ENCODE measurements at regions of chr19 and their contacts with region 1.

Region 1: GRCh38 chr19:18785179-18786128 is 5.7 kb downstream of the COMP start:
- DNase-seq: peak; percentile 19 to 71 (median 45)
- ATAC-seq: peak; percentile 85
- H3K4me3 ChIP-seq: no peak overlapping the region
- H3K4me3 Mint-ChIP-seq: peak overlapping the region; percentile 12 to 69 (median 51)
- H3K27ac ChIP-seq: no peak overlapping the region
- H3K27ac Mint-ChIP-seq: peak overlapping the region in 1 of 9 donors; percentile 48
- H3K4me1 ChIP-seq: peaks cover 11 to 13% of the 10 kb centered on the region in 2 donors
- H3K4me1 Mint-ChIP-seq: peaks cover 21 to 49% (median 37%) of the 10 kb centered on the region in 7 donors
- H3K27me3 ChIP-seq: peaks cover 4 to 16% of the 10 kb centered on the region in 2 donors
- H3K27me3 Mint-ChIP-seq: peaks cover 37 to 54% (median 44%) of the 10 kb centered on the region in 5 donors

Region 2: GRCh38 chr19:18612772-18613588 is 172.5 kb before region 1 on chr19 and contains the start of gene TMEM59L:
- CTCF ChIA-PET with region 1: no interaction called
- POLR2A ChIA-PET with region 1: interaction called, 3 read pairs
- intact Hi-C with region 1: loop called in 1 of 2 experiments (anchors 5 kb)
- DNase-seq: peak in 8 of 9 donors; percentile 36 to 68 (median 51)
- ATAC-seq: peak; percentile 73
- H3K4me3 ChIP-seq: peak within 1 kb of the TSS; percentile 61
- H3K4me3 Mint-ChIP-seq: peak within 1 kb of the TSS; percentile 71 to 87 (median 79)
- H3K27ac ChIP-seq: no peak within 1 kb of the TSS
- H3K27ac Mint-ChIP-seq: peak within 1 kb of the TSS in 3 of 9 donors; percentile 55 to 77 (median 62)
- H3K4me1 ChIP-seq: peaks cover 12% of the 10 kb centered on the region in 2 donors
- H3K4me1 Mint-ChIP-seq: peaks cover 6 to 28% (median 18%) of the 10 kb centered on the region in 7 donors
- H3K27me3 ChIP-seq: peaks cover 11 to 26% of the 10 kb centered on the region in 2 donors
- H3K27me3 Mint-ChIP-seq: peaks cover 49 to 75% (median 70%) of the 10 kb centered on the region in 5 donors
- total RNA-seq, gene TMEM59L: 0.22 to 0.24 TPM in 2 of 5 experiments, not detected in the others

Region 3: DNA sequence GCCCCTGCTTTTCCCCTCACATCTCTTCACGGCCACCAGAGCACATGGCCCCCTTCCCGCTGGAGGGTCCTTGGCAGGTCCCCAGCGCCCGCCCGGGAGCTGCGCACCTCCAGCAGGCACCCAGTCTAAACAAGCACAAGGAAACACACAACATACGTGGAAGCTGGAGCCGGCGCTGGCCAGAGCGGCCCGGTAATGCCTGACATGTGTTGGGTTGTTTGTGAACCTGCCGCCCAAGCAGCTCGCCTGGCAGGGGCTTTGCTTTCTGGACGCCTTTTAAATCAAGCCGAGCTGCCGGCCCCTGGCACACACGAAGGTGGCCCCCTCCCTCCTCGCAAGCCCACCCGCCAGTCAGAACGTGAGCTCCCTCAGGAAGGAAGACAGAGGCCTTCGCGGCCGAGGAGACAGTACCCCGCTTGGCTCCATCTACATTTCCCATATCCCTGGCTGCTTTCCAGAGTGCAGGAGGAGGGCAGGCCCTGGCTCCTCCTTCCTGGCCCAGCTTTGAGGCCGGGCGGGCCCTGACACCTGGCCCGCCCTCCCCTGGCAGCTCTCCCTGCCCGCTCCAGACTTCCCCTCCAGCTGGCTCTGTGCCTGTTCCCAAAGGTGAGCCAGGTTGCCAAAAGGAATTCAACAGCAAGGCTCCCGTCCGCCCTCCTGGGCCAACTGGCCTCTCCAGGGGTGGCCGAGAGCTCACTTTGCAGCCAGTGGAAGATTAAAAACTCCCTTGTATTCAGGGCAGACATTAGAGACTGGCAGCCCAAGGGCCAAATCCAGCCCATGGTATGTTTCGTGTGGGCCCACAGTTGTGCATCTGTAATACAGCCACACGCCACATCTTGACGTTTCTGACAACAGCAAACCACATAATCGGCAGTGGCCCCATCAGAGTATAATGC is 23.1 kb before region 1 on chr19:
- CTCF ChIA-PET with region 1: no interaction called
- POLR2A ChIA-PET with region 1: no interaction called
- intact Hi-C with region 1: no loop called
- DNase-seq: no peak
- ATAC-seq: peak; percentile 22
- H3K4me3 ChIP-seq: no peak overlapping the region
- H3K4me3 Mint-ChIP-seq: no peak overlapping the region
- H3K27ac ChIP-seq: no peak overlapping the region
- H3K27ac Mint-ChIP-seq: no peak overlapping the region
- H3K4me1 ChIP-seq: no peaks in the 10 kb centered on the region
- H3K4me1 Mint-ChIP-seq: peaks cover 0 to 2% (median 0%) of the 10 kb centered on the region in 7 donors
- H3K27me3 ChIP-seq: no peaks in the 10 kb centered on the region
- H3K27me3 Mint-ChIP-seq: no peaks in the 10 kb centered on the region

Region 4: GRCh38 chr19:18831524-18832305 is 46.3 kb after region 1 on chr19 and contains the start of gene UPF1:
- CTCF ChIA-PET with region 1: no interaction called
- POLR2A ChIA-PET with region 1: interaction called, 3 read pairs
- intact Hi-C with region 1: loop called in 1 of 2 experiments (anchors 10 kb)
- DNase-seq: peak; percentile 92 to 99 (median 96)
- ATAC-seq: peak; percentile 93
- H3K4me3 ChIP-seq: peak within 1 kb of the TSS; percentile 95
- H3K4me3 Mint-ChIP-seq: peak within 1 kb of the TSS; percentile 89 to 97 (median 92)
- H3K27ac ChIP-seq: peak within 1 kb of the TSS; percentile 90
- H3K27ac Mint-ChIP-seq: peak within 1 kb of the TSS; percentile 83 to 96 (median 90)
- H3K4me1 ChIP-seq: peaks cover 17 to 23% of the 10 kb centered on the region in 2 donors
- H3K4me1 Mint-ChIP-seq: peaks cover 36 to 42% (median 39%) of the 10 kb centered on the region in 7 donors
- H3K27me3 ChIP-seq: no peaks in the 10 kb centered on the region
- H3K27me3 Mint-ChIP-seq: peaks cover 0 to 18% (median 6%) of the 10 kb centered on the region in 5 donors
- total RNA-seq, gene UPF1: 98.7 to 148 (median 113) TPM

Region 5: GRCh38 chr19:19259741-19260140 is 474.3 kb after region 1 on chr19:
- CTCF ChIA-PET with region 1: no interaction called
- POLR2A ChIA-PET with region 1: no interaction called
- intact Hi-C with region 1: no loop called
- DNase-seq: no peak
- ATAC-seq: no peak
- H3K4me3 ChIP-seq: no peak overlapping the region
- H3K4me3 Mint-ChIP-seq: peak overlapping the region in 2 of 10 donors; percentile 8 to 12
- H3K27ac ChIP-seq: no peak overlapping the region
- H3K27ac Mint-ChIP-seq: no peak overlapping the region
- H3K4me1 ChIP-seq: no peaks in the 10 kb centered on the region
- H3K4me1 Mint-ChIP-seq: peaks cover 4 to 12% (median 9%) of the 10 kb centered on the region in 7 donors
- H3K27me3 ChIP-seq: peaks cover 6% of the 10 kb centered on the region in 2 donors
- H3K27me3 Mint-ChIP-seq: peaks cover 47 to 63% (median 51%) of the 10 kb centered on the region in 5 donors

Measured in naive thymus-derived CD4-positive, alpha-beta T cell (primary cell).